ENCODE measurements at regions of chr1 and their contacts with region 1.

Region 1: DNA sequence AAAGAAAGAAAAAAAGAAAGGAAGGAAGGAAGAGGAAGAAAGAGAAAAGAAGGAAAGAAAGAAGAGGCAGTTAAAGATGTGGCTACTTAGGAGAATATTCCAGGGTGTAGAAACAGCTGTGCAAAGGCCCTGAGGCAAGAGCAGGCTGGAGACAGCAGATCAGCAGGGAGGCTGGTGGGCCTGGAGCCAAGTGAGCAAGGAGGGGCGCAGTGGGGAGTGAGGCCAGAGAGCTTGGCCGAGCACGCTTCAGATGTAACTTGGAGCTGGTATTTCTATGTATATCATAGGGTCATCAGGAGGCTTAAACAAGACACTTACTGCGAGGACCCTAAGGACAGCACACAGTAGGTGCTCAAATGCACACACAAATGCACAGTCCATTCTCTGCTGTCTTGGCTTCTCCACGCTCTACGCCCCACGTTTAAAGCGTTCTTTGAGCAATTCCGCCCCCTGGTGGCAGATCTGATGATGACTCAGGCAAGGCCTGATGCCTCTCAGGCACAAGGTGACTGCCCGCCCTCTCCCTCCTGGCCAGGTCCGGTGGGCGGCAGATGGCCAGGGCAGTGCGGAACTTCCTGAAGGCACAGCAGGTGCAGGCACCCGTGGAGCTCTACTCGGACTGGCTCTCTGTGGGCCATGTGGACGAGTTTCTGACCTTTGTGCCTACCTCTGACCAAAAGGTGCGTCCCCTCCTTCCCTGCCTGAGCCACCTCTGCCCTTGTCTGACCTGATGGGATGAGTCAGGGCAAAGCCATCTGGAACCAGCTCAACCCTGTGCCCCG is 11.9 kb upstream of the PADI3 start:
- DNase-seq: peak; percentile 96
- H3K4me3 Mint-ChIP-seq: no peak overlapping the region
- H3K27ac Mint-ChIP-seq: no peak overlapping the region
- H3K4me1 Mint-ChIP-seq: no peaks in the 10 kb centered on the region
- H3K27me3 Mint-ChIP-seq: no peaks in the 10 kb centered on the region

Region 2: DNA sequence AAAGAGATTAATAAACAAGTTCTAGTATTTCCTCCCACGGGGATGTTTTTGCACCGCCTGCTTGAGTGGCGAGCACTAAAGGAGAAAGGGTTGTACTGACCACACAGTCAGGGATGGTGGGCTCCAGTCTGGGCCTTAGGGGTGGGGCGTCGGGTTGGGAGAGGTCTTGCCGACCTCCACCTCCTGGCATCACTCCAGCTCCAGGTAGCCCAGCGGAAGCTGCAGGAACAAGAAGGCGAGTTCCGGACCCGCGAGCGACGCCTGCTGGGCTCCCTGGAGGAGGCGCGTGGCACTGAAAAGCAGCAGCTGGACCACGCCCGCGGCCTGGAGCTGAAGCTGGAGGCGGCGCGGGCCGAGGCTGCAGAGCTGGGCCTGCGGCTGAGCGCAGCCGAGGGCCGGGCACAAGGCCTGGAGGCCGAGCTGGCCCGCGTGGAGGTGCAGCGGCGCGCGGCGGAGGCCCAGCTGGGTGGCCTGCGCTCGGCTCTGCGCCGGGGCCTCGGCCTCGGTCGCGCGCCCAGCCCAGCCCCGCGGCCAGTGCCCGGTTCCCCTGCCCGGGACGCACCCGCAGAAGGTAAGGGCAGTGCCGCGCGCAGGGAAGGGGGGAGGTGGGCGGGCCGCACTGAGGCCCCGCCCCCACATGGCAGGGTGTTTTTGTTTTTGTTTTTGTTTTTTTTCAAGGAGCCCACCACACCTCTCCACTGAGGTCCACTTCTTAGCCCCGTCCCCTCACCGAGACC is 276.2 kb before region 1 on chr1:
- CTCF ChIA-PET with region 1: no interaction called
- intact Hi-C with region 1: loop called (anchors 10 kb)
- DNase-seq: peak; percentile 90
- H3K4me3 Mint-ChIP-seq: peak overlapping the region; percentile 74
- H3K27ac Mint-ChIP-seq: no peak overlapping the region
- H3K4me1 Mint-ChIP-seq: peaks cover 8% of the 10 kb centered on the region
- H3K27me3 Mint-ChIP-seq: no peaks in the 10 kb centered on the region

Region 3: DNA sequence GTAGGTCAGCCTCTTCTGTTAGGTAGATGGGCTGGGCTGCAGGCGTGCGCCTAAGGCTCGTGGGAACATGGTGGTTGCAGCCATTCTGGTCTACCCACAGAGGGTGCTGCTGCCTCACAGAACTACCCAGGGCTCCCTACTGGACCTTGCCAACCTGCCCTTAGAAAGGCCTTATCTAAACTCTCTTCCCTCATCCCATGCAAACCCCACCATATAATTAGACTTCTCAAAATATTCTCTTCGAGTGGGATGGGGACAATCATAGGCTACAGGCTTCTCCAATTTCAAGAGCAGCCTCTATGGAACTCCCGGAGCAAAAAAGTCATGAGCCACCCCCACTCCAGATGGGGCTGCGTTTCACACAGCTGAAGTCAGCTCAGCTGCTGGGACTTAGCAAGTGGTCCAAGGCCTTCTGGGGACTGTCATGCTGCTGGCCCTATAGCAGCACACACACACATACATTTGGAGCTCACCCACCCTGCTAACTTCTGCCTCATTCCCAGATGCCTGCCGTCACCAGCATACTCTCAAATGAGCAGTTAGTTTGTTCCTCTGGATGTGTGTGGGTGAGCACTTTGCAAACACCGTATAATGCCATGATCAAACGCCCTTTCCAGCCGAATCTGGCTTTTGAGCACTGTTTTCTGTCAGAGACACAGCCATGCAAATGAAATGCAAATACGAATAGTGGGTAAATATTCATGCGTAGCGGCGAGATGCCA is 177.1 kb before region 1 on chr1:
- CTCF ChIA-PET with region 1: interaction called, 3 read pairs
- intact Hi-C with region 1: loop called (anchors 2 kb)
- DNase-seq: peak; percentile 51
- H3K4me3 Mint-ChIP-seq: no peak overlapping the region
- H3K27ac Mint-ChIP-seq: no peak overlapping the region
- H3K4me1 Mint-ChIP-seq: no peaks in the 10 kb centered on the region
- H3K27me3 Mint-ChIP-seq: peaks cover 5% of the 10 kb centered on the region

Region 4: GRCh38 chr1:17119773-17120480 is 117.0 kb before region 1 on chr1:
- CTCF ChIA-PET with region 1: interaction called, 109 read pairs
- intact Hi-C with region 1: loop called (anchors 1 kb)
- DNase-seq: no peak
- H3K4me3 Mint-ChIP-seq: peak overlapping the region; percentile 24
- H3K27ac Mint-ChIP-seq: no peak overlapping the region
- H3K4me1 Mint-ChIP-seq: peaks cover 10% of the 10 kb centered on the region
- H3K27me3 Mint-ChIP-seq: peaks cover 43% of the 10 kb centered on the region

Region 5: GRCh38 chr1:17125756-17126237 is 111.2 kb before region 1 on chr1:
- CTCF ChIA-PET with region 1: interaction called, 109 read pairs
- intact Hi-C with region 1: loop called (anchors 1 kb)
- DNase-seq: peak; percentile 90
- H3K4me3 Mint-ChIP-seq: no peak overlapping the region
- H3K27ac Mint-ChIP-seq: no peak overlapping the region
- H3K4me1 Mint-ChIP-seq: peaks cover 3% of the 10 kb centered on the region
- H3K27me3 Mint-ChIP-seq: peaks cover 8% of the 10 kb centered on the region

Region 6: GRCh38 chr1:17335821-17336710 is 99.1 kb after region 1 on chr1:
- CTCF ChIA-PET with region 1: no interaction called
- intact Hi-C with region 1: loop called (anchors 1 kb)
- DNase-seq: peak; percentile 84
- H3K4me3 Mint-ChIP-seq: no peak overlapping the region
- H3K27ac Mint-ChIP-seq: no peak overlapping the region
- H3K4me1 Mint-ChIP-seq: peaks cover 5% of the 10 kb centered on the region
- H3K27me3 Mint-ChIP-seq: no peaks in the 10 kb centered on the region